PC-9 (cell line): ENCODE measurements at regions of chr13 and their contacts with region 1.

Region 1: DNA sequence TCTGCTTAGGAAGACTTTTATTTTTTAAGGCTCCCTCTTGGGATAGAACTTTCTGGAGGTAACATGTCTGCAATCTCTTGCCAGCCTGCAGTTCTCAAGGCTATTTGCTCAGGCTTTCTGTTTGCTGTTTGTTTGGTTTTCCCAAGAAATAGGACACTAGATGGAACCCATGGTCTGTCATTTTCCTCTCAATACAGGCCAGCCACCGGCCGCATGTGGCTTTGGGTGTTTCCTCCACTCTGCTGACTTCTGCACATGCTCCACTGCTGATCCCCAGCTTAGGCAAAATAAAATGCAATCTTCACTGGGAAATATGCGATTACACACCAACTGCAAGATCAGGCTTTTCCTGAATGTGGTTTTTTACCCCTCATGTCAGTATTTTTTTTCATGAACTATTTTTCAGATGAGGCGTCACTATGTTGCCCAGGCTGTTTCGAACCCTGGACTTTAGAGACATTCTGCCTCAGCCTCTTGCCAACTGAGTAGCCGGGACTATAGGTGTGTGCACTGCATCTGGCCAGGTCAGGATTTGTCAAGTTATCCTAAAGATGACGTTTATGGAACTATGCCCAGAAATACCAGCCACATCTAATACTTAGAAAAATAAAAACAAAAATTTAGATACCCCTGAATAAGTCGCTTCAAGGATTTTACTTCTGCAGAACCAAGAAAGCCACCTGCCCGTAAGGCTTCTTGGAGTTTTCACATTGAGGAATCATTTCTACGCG is 94.3 kb upstream of the PABPC3 start:
- DNase-seq: no peak
- H3K4me3 ChIP-seq: no peak overlapping the region
- H3K27ac ChIP-seq: no peak overlapping the region
- H3K4me1 ChIP-seq: peaks cover 13% of the 10 kb centered on the region
- H3K27me3 ChIP-seq: no peaks in the 10 kb centered on the region
- CTCF ChIP-seq: no peak

Region 2: GRCh38 chr13:25018729-25019115 is 17.1 kb after region 1 on chr13:
- CTCF ChIA-PET with region 1: no interaction called
- POLR2A ChIA-PET with region 1: no interaction called
- intact Hi-C with region 1: no loop called
- DNase-seq: no peak
- H3K4me3 ChIP-seq: no peak overlapping the region
- H3K27ac ChIP-seq: no peak overlapping the region
- H3K4me1 ChIP-seq: no peaks in the 10 kb centered on the region
- H3K27me3 ChIP-seq: peaks cover 29% of the 10 kb centered on the region
- CTCF ChIP-seq: no peak

Region 3: DNA sequence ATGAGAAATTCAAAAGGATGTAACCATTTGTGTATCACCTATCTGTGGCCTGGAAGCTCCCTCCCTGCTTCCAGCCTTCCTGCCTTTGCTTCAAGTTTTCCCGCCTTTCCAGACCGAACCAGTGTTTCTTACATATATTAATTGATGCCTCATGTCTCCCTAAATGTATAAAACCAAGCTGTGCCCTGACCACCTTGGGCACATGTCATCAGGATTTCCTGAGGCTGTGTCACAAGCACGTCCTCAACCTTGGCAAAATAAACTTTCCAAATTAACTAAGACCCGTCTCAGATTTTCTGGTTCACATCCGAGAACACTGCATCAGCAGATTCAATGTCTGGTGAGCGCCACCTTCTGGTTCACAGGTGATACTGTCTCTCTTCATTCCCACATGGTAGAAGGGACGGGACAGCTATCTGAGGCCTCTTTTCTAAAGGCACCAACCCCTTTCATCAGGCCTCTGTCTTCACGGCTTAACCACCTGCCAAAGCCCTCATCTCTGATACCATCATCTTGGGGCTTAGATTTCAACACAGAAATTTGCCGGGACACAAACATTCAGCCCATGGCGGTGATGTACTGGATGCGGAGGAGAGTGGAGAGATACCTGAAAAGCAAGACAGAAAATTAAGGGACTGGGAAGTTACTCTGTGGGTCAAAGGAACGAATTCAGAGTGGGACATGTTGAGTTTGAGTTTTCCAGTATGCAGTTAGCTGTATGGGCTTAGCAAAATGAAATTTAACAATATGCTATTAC is 35.6 kb after region 1 on chr13:
- CTCF ChIA-PET with region 1: interaction called, 3 read pairs
- POLR2A ChIA-PET with region 1: no interaction called
- intact Hi-C with region 1: loop called (anchors 1 kb)
- DNase-seq: peak; percentile 11 to 38
- H3K4me3 ChIP-seq: no peak overlapping the region
- H3K27ac ChIP-seq: no peak overlapping the region
- H3K4me1 ChIP-seq: no peaks in the 10 kb centered on the region
- H3K27me3 ChIP-seq: peaks cover 50% of the 10 kb centered on the region
- CTCF ChIP-seq: peak; percentile 82

Region 4: GRCh38 chr13:25114220-25114619 is 112.6 kb after region 1 on chr13:
- CTCF ChIA-PET with region 1: interaction called, 3 read pairs
- POLR2A ChIA-PET with region 1: no interaction called
- intact Hi-C with region 1: loop called (anchors 1 kb)
- DNase-seq: peak; percentile 60 to 68
- H3K4me3 ChIP-seq: no peak overlapping the region
- H3K27ac ChIP-seq: no peak overlapping the region
- H3K4me1 ChIP-seq: peaks cover 17% of the 10 kb centered on the region
- H3K27me3 ChIP-seq: peaks cover 7% of the 10 kb centered on the region; the same call in 1 of the 2 replicates
- CTCF ChIP-seq: peak; percentile 81